B cell (primary cell): ENCODE measurements at regions of chr1 and their contacts with region 1.

Region 1: DNA sequence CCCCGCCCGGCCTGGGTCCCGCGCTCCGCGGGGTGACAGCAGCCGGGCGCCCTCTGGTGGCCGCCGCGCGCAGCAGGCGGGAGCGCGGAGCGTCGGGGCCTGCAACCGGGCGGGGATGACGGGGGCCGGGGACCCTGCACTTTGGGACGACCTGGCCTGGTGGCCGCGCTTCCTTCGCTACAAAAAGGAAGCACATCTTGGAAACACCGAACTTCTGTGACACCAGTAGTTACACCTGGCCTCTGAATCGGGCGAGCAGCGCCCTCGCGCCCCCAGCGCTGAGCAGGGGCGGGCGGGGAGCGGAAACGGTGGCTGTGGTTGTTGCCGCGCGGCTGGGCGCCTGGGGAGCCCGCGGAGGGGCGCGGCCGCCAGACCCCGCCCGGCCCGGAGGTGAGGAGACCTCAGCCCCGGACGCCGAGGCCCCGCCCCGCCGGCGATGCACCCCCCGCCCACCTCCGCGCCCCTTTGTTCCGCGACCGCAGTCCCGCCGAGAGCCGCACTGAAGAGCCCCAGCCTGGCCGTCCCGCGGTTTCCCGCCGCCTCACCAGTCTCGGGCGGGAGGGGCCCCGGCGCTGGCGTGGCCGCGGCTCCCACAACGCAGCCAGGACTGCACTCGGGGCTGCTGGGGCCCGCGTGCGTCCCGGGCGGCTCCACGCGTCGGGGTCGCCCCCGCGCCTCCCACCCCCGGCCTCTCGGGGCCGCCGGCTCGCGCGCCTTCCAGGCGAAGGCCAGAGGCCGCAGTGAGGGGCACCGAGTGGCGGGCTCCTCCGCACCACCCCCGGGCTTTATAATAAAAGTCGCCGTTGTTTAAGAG is 59.3 kb downstream of the H3-3A start:
- DNase-seq: peak; percentile 94
- ATAC-seq: peak; percentile 72
- H3K4me3 ChIP-seq: peak overlapping the region in 4 of 5 experiments; percentile 59 to 74 (median 62)
- H3K4me3 Mint-ChIP-seq: peak overlapping the region; percentile 90
- H3K27ac ChIP-seq: peak overlapping the region; percentile 96 to 97
- H3K27ac Mint-ChIP-seq: peak overlapping the region; percentile 99
- H3K4me1 ChIP-seq: peaks cover 68 to 75% of the 10 kb centered on the region in 2 donors
- H3K4me1 Mint-ChIP-seq: peaks cover 76% of the 10 kb centered on the region
- H3K27me3 ChIP-seq: no peaks in the 10 kb centered on the region
- H3K27me3 Mint-ChIP-seq: no peaks in the 10 kb centered on the region
- CTCF ChIP-seq: peak; percentile 79

Region 2: GRCh38 chr1:225428068-225428880 is 693.5 kb before region 1 on chr1:
- CTCF ChIA-PET with region 1: no interaction called
- POLR2A ChIA-PET with region 1: interaction called, 3 read pairs
- intact Hi-C with region 1: loop called (anchors 2 kb)
- DNase-seq: peak; percentile 92
- ATAC-seq: peak; percentile 90
- H3K4me3 ChIP-seq: peak overlapping the region; percentile 74 to 93 (median 91)
- H3K4me3 Mint-ChIP-seq: peak overlapping the region; percentile 85
- H3K27ac ChIP-seq: peak overlapping the region; percentile 78 to 83
- H3K27ac Mint-ChIP-seq: peak overlapping the region; percentile 80
- H3K4me1 ChIP-seq: peaks cover 36 to 41% of the 10 kb centered on the region in 2 donors
- H3K4me1 Mint-ChIP-seq: peaks cover 45% of the 10 kb centered on the region
- H3K27me3 ChIP-seq: no peaks in the 10 kb centered on the region
- H3K27me3 Mint-ChIP-seq: no peaks in the 10 kb centered on the region
- CTCF ChIP-seq: no peak

Region 3: DNA sequence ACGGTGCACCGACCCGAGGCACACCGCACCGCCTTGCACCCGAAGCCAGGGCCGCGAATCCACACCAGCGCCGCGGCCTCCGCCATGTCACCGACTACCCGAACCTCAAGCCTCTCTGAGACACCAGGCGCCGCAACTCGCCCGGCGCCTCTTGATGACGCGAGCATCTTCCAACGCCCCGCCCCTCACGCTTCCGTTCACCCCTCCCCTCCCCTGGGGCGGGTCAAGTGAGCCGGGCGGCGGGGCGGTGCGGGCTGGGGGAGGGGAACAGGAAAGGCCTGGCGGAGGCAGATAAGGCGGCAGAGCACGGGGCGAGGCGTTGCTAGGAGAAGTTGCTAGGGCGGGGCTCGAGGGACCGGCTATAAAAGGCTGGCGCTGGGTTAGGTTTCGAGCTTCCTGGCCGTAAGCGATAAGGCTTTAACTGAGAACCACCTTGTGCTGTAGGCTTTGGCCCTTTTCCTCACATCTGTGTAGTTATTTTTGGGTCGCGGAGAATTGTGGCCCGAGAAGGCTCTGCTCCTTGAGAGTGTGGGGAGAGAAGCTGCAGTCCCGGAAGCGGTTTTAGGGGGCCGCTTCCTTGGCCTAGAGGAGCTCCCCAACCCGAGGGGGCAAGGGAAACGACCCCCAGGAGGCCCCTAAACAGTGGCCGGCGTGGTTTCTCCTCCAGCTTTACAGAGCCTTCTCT is 122.4 kb before region 1 on chr1 and contains the start of gene SDE2:
- CTCF ChIA-PET with region 1: interaction called, 9 read pairs
- POLR2A ChIA-PET with region 1: interaction called, 15 read pairs
- intact Hi-C with region 1: loop called (anchors 1 kb)
- DNase-seq: peak; percentile 100
- ATAC-seq: peak; percentile 81
- H3K4me3 ChIP-seq: peak within 1 kb of the TSS; percentile 75 to 93 (median 88)
- H3K4me3 Mint-ChIP-seq: peak within 1 kb of the TSS; percentile 100
- H3K27ac ChIP-seq: peak within 1 kb of the TSS; percentile 100
- H3K27ac Mint-ChIP-seq: peak within 1 kb of the TSS; percentile 97
- H3K4me1 ChIP-seq: peaks cover 65 to 72% of the 10 kb centered on the region in 2 donors
- H3K4me1 Mint-ChIP-seq: peaks cover 74% of the 10 kb centered on the region
- H3K27me3 ChIP-seq: no peaks in the 10 kb centered on the region
- H3K27me3 Mint-ChIP-seq: no peaks in the 10 kb centered on the region
- CTCF ChIP-seq: no peak
- total RNA-seq, gene SDE2: 26.0 and 26.3 TPM in 2 replicates

Region 4: GRCh38 chr1:226109829-226110248 is 12.0 kb before region 1 on chr1:
- CTCF ChIA-PET with region 1: interaction called, 62 read pairs
- POLR2A ChIA-PET with region 1: interaction called, 47 read pairs
- intact Hi-C with region 1: loop called (anchors 1 kb)
- DNase-seq: peak; percentile 93
- ATAC-seq: peak; percentile 64
- H3K4me3 ChIP-seq: peak overlapping the region in 4 of 5 experiments; percentile 57 to 85 (median 72)
- H3K4me3 Mint-ChIP-seq: peak overlapping the region; percentile 96
- H3K27ac ChIP-seq: peak overlapping the region; percentile 96 to 99
- H3K27ac Mint-ChIP-seq: peak overlapping the region; percentile 98
- H3K4me1 ChIP-seq: peaks cover 36 to 44% of the 10 kb centered on the region in 2 donors
- H3K4me1 Mint-ChIP-seq: peaks cover 42% of the 10 kb centered on the region
- H3K27me3 ChIP-seq: no peaks in the 10 kb centered on the region
- H3K27me3 Mint-ChIP-seq: no peaks in the 10 kb centered on the region
- CTCF ChIP-seq: no peak

Region 5: DNA sequence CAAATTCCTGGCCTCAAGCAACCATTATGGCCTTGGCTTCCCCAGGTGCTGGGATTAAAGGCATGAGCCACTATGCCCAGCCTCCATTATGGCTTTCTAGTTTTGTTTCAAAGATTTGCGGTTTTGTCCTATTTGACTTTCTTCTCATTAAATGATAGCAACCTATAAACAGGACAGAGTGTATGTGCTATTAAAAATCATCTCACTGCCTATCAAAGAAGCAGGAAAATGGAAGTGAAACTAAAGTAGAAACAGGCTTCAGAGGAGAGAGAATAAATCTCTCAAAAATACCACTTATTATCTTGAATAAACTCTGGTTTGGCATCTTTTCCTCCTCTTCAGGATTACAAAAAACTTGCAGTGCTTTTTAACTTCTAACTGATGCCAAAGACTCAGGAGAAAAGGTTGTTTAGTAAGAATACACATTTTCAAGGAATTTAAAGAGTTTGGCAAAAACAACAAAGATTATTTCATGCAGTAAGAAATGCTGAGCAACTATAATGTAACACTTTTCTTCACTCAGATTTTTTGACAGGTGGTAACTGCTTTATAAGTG is 36.0 kb after region 1 on chr1:
- CTCF ChIA-PET with region 1: interaction called, 42 read pairs
- POLR2A ChIA-PET with region 1: interaction called, 3 read pairs
- intact Hi-C with region 1: loop called (anchors 5 kb)
- DNase-seq: peak; percentile 47
- ATAC-seq: peak; percentile 61
- H3K4me3 ChIP-seq: peak overlapping the region in 1 of 5 experiments; percentile 16
- H3K4me3 Mint-ChIP-seq: peak overlapping the region; percentile 67
- H3K27ac ChIP-seq: peak overlapping the region; percentile 61 to 69
- H3K27ac Mint-ChIP-seq: peak overlapping the region; percentile 93
- H3K4me1 ChIP-seq: peaks cover 56 to 68% of the 10 kb centered on the region in 2 donors
- H3K4me1 Mint-ChIP-seq: peaks cover 69% of the 10 kb centered on the region
- H3K27me3 ChIP-seq: no peaks in the 10 kb centered on the region
- H3K27me3 Mint-ChIP-seq: no peaks in the 10 kb centered on the region
- CTCF ChIP-seq: no peak

Region 6: DNA sequence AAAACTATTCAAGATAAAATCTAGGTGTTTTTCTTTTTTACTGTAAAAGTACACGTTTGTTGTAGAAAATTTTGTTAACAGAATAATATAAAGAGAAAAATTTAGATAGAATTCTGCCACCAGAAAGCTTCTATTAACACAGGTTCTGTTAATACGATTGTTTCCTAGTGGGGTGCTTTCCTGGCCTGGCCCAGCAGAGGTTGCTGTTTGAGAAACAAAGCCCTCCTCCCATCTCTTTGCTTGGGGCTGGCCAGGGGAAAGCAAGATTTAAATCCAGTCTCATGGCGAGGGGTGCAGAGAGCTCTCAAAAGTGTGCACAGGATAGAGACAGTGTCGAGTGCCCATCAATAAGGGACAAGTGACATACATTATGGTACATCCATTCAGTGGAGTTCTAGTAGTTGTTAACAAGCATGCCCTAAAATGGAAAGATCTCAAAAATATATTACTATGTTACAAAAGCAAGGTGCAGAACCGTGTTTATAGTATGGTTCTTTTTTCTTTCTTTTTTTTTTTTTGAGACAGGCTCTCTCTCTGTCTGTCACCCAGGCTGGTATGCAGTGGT is 79.3 kb after region 1 on chr1:
- CTCF ChIA-PET with region 1: interaction called, 402 read pairs
- POLR2A ChIA-PET with region 1: interaction called, 22 read pairs
- intact Hi-C with region 1: loop called (anchors 1 kb)
- DNase-seq: no peak
- ATAC-seq: no peak
- H3K4me3 ChIP-seq: no peak overlapping the region
- H3K4me3 Mint-ChIP-seq: no peak overlapping the region
- H3K27ac ChIP-seq: no peak overlapping the region
- H3K27ac Mint-ChIP-seq: peak overlapping the region; percentile 32
- H3K4me1 ChIP-seq: peaks cover 13 to 17% of the 10 kb centered on the region in 2 donors
- H3K4me1 Mint-ChIP-seq: peaks cover 23% of the 10 kb centered on the region
- H3K27me3 ChIP-seq: no peaks in the 10 kb centered on the region
- H3K27me3 Mint-ChIP-seq: peaks cover 3% of the 10 kb centered on the region
- CTCF ChIP-seq: peak; percentile 22

Region 7: GRCh38 chr1:226370144-226370923 is 248.5 kb after region 1 on chr1:
- CTCF ChIA-PET with region 1: interaction called, 7 read pairs
- POLR2A ChIA-PET with region 1: no interaction called
- intact Hi-C with region 1: loop called (anchors 1 kb)
- DNase-seq: peak; percentile 42
- ATAC-seq: peak; percentile 72
- H3K4me3 ChIP-seq: peak overlapping the region in 1 of 5 experiments; percentile 8
- H3K4me3 Mint-ChIP-seq: peak overlapping the region; percentile 73
- H3K27ac ChIP-seq: peak overlapping the region; percentile 58 to 81
- H3K27ac Mint-ChIP-seq: peak overlapping the region; percentile 91
- H3K4me1 ChIP-seq: peaks cover 33 to 39% of the 10 kb centered on the region in 2 donors
- H3K4me1 Mint-ChIP-seq: peaks cover 44% of the 10 kb centered on the region
- H3K27me3 ChIP-seq: no peaks in the 10 kb centered on the region
- H3K27me3 Mint-ChIP-seq: no peaks in the 10 kb centered on the region
- CTCF ChIP-seq: no peak